ENCODE measurements at regions of chr2 and their contacts with region 1.

Region 1: DNA sequence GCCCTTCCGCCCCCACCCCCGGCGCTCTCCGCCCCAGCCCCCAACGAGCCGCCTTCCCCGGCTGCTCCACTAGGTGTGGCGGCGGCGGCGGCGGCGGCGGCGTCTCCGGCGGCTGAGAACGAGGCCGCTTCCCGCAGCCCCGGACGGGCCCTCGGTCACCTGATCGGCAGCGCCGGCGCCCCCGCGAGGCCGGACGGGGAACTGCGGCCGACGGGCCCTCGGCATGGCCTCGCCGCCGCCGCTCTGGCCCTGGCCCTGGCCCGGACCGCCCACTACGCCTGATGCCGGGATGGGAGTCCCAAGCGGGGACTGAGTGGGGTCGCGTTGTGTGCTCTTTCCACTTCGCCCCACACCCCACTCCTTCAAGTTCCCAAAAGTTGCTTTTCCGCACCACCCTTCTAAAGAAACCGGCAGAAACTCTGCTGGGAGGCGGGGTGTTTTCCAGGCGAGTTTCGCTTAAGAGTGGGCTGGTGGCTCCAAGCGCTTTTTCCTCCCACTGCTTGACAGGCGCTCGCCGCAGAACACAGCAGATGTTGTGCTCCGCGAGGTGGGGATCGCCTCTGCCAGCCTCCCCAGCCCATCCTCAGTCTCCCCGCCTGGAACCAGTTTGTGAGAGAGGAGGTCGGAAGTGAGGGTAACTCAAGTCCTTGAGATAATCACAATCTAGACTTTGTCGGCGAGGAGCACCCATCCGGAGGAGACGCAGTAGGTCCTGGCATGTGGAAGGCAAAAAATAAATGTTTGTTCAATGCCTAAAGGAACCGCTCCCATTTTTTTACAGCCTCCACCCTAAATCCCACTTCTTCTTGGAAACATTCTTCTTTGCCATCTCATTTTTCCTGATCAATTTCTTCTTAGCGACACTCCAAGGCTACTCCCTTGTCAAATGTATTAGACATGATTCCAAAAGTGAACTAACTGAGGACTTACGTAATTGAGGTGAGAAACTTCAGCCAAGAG is at the start of gene NCKAP1:
- DNase-seq: peak; percentile 87
- H3K4me3 Mint-ChIP-seq: peak within 1 kb of the TSS; percentile 78
- H3K27ac Mint-ChIP-seq: no peak within 1 kb of the TSS
- H3K4me1 Mint-ChIP-seq: peaks cover 22% of the 10 kb centered on the region
- H3K27me3 Mint-ChIP-seq: peaks cover 46% of the 10 kb centered on the region
- total RNA-seq, gene NCKAP1: 10.6 to 11.9 TPM

Region 2: DNA sequence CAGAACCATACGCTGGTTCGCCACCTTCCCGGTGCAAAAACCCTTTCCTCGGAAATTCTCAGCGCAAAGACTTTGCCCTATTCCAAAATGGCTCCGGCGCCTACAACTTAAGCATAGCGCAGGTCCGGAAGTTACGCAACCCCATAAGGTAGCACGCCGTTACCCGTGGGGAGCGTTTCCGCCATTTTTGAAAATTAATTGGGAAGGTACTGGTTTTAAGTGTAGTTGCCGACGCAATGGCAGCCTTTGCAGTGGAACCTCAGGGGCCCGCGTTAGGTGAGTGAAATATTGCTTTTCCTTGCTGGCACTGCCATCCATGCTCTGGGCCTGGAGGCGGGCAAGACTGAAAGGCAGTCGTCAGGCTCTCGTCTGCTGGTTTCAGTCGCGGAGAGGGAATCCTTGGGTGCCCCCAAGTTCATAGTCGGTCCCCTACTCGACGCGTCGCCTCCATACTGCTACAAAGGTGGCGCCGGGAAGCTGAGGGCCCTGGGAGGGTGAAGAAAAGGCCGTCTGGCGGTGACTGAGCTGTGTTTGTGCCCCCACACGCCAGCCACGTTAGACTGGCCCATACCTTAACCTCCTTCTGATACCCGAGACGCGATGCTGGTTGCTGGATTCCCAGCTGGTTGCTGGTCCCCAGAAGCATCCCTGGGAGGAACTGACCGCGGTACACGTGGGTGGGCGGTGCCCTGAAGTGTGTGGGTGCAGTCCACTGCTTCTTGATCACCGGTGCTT is 85.8 kb after region 1 on chr2 and contains the start of gene NUP35:
- CTCF ChIA-PET with region 1: no interaction called
- intact Hi-C with region 1: loop called (anchors 1 kb)
- DNase-seq: peak; percentile 90
- H3K4me3 Mint-ChIP-seq: peak within 1 kb of the TSS; percentile 93
- H3K27ac Mint-ChIP-seq: peak within 1 kb of the TSS; percentile 95
- H3K4me1 Mint-ChIP-seq: peaks cover 32% of the 10 kb centered on the region
- H3K27me3 Mint-ChIP-seq: peaks cover 6% of the 10 kb centered on the region
- total RNA-seq, gene NUP35: 25.6 to 28.8 TPM

Region 3: DNA sequence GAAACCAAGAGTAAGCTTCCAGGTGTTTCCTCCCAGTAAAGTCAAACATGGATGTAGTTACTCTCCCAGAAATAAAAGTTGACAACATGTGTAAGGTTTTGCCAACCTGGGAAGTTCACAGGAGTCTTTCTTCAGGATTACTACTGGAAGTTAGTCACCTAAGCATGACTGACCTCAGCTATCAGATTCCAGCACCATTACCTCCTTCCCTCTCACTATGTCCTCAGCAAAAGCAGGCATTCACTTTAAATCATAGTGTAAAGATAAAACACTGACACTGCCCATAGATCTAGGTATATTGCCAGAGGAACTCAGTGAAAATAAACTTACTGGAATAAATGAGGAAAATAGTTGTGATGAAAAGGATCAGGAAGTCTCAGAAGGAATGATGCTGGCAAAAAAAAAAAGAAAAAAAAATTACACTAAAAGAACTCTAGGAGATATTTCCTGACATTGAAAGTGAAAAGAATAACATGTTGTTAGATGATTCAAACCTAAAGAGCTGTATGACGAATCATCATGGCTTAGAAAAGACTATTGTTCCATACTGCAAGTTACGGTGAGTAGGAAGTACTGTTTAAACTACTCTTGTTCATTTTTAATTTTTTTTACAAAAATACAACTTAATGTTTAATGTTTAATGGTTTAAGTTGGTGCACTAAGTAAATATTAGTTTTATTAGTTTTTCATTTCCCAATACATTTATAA is 1075.2 kb after region 1 on chr2:
- CTCF ChIA-PET with region 1: no interaction called
- intact Hi-C with region 1: no loop called
- DNase-seq: no peak
- H3K4me3 Mint-ChIP-seq: no peak overlapping the region
- H3K27ac Mint-ChIP-seq: no peak overlapping the region
- H3K4me1 Mint-ChIP-seq: no peaks in the 10 kb centered on the region
- H3K27me3 Mint-ChIP-seq: no peaks in the 10 kb centered on the region